CD4-positive, alpha-beta T cell (primary cell): ENCODE measurements at regions of chr1 and their contacts with region 1.

Region 1: GRCh38 chr1:1307908-1308755 is at the starts of genes ACAP3 and PUSL1:
- DNase-seq: peak; percentile 77 to 96 (median 86)
- ATAC-seq: peak; percentile 74
- H3K4me3 ChIP-seq: peak within 1 kb of the TSS; percentile 70
- H3K4me3 Mint-ChIP-seq: peak within 1 kb of the TSS; percentile 93
- H3K27ac ChIP-seq: peak within 1 kb of the TSS; percentile 76 to 88
- H3K27ac Mint-ChIP-seq: peak within 1 kb of the TSS; percentile 87
- H3K4me1 ChIP-seq: peaks cover 46% of the 10 kb centered on the region
- H3K4me1 Mint-ChIP-seq: peaks cover 25% of the 10 kb centered on the region
- H3K27me3 ChIP-seq: no peaks in the 10 kb centered on the region
- H3K27me3 Mint-ChIP-seq: no peaks in the 10 kb centered on the region
- CTCF ChIP-seq: no peak
- total RNA-seq, gene ACAP3: 45.3 to 46.4 TPM
- total RNA-seq, gene PUSL1: 18.1 to 19.2 TPM

Region 2: DNA sequence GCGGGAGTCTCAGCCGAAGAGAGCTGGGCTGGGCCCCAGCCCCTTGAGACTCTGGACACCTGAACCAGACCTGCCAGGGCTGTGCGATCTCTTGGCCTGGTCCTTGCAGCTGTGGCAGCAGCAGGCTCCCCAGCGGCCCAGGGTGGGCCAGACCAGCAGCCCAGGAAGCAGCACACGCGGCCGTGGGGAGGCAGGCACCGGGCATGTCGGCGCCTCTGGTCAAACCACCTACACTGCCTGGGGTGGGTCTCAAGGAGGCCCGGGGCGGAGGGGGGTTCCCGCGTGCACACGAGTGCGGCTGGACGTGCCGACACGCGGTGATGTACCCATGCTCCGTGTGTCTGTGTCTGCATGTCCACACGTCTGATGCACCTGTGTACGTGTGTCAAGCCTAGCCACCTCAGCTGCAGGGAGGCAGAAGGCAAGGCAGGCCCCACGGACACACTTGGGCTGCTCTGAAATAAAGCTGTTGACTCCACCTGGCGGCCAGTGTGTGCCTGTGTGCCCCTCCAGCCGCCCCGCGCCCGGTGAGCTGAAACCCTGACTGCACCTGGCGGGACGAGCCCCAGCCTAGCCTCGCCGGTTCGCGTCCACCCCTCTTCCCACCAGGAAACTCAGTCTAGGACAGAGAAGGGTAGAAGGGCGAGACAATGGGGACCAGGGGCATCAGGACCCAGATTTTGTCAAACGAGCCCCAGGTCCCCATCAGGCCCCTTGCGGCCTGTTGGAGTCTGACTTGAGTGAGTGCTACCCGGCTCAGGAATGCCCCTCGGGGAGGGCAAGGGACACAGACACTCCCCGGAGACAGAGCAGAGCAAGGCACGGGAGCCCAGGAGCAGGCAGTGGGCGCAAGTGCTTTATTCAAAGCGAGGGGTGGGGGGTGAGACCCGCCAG is 16.3 kb before region 1 on chr1:
- CTCF ChIA-PET with region 1: no interaction called
- POLR2A ChIA-PET with region 1: no interaction called
- intact Hi-C with region 1: no loop called
- DNase-seq: peak; percentile 43 to 84 (median 61)
- ATAC-seq: peak; percentile 81
- H3K4me3 ChIP-seq: no peak overlapping the region
- H3K4me3 Mint-ChIP-seq: no peak overlapping the region
- H3K27ac ChIP-seq: no peak overlapping the region
- H3K27ac Mint-ChIP-seq: no peak overlapping the region
- H3K4me1 ChIP-seq: peaks cover 14% of the 10 kb centered on the region
- H3K4me1 Mint-ChIP-seq: no peaks in the 10 kb centered on the region
- H3K27me3 ChIP-seq: no peaks in the 10 kb centered on the region
- H3K27me3 Mint-ChIP-seq: no peaks in the 10 kb centered on the region
- CTCF ChIP-seq: peak; percentile 42

Region 3: GRCh38 chr1:1324521-1325287 is 16.6 kb after region 1 on chr1 and contains the starts of genes CPTP and INTS11:
- CTCF ChIA-PET with region 1: no interaction called
- POLR2A ChIA-PET with region 1: interaction called, 4 read pairs
- intact Hi-C with region 1: loop called in 1 of 2 experiments (anchors 1 kb)
- DNase-seq: peak; percentile 93 to 98 (median 96)
- ATAC-seq: peak; percentile 84
- H3K4me3 ChIP-seq: peak within 1 kb of the TSS; percentile 69
- H3K4me3 Mint-ChIP-seq: peak within 1 kb of the TSS; percentile 93
- H3K27ac ChIP-seq: peak within 1 kb of the TSS; percentile 61 to 70
- H3K27ac Mint-ChIP-seq: peak within 1 kb of the TSS; percentile 81
- H3K4me1 ChIP-seq: peaks cover 56% of the 10 kb centered on the region
- H3K4me1 Mint-ChIP-seq: peaks cover 28% of the 10 kb centered on the region
- H3K27me3 ChIP-seq: no peaks in the 10 kb centered on the region
- H3K27me3 Mint-ChIP-seq: no peaks in the 10 kb centered on the region
- CTCF ChIP-seq: no peak
- total RNA-seq, gene CPTP: 11.6 to 12.9 TPM
- total RNA-seq, gene INTS11: 130 to 137 TPM

Region 4: GRCh38 chr1:1349256-1350012 is 41.3 kb after region 1 on chr1 and contains the start of gene DVL1:
- CTCF ChIA-PET with region 1: no interaction called
- POLR2A ChIA-PET with region 1: no interaction called
- intact Hi-C with region 1: loop called in 1 of 2 experiments (anchors 1 kb)
- DNase-seq: peak; percentile 58 to 90 (median 70)
- ATAC-seq: peak; percentile 75
- H3K4me3 ChIP-seq: peak within 1 kb of the TSS; percentile 58
- H3K4me3 Mint-ChIP-seq: peak within 1 kb of the TSS; percentile 86
- H3K27ac ChIP-seq: peak within 1 kb of the TSS in 1 of 2 donors; percentile 53
- H3K27ac Mint-ChIP-seq: no peak within 1 kb of the TSS
- H3K4me1 ChIP-seq: peaks cover 58% of the 10 kb centered on the region
- H3K4me1 Mint-ChIP-seq: peaks cover 36% of the 10 kb centered on the region
- H3K27me3 ChIP-seq: peaks cover 14 to 19% of the 10 kb centered on the region in 2 experiments
- H3K27me3 Mint-ChIP-seq: peaks cover 21% of the 10 kb centered on the region
- CTCF ChIP-seq: peak; percentile 27
- total RNA-seq, gene DVL1: 44.9 to 45.5 TPM

Region 5: GRCh38 chr1:1361982-1362423 is 53.9 kb after region 1 on chr1:
- CTCF ChIA-PET with region 1: no interaction called
- POLR2A ChIA-PET with region 1: no interaction called
- intact Hi-C with region 1: no loop called
- DNase-seq: no peak
- ATAC-seq: no peak
- H3K4me3 ChIP-seq: no peak overlapping the region
- H3K4me3 Mint-ChIP-seq: no peak overlapping the region
- H3K27ac ChIP-seq: no peak overlapping the region
- H3K27ac Mint-ChIP-seq: no peak overlapping the region
- H3K4me1 ChIP-seq: peaks cover 25% of the 10 kb centered on the region
- H3K4me1 Mint-ChIP-seq: peaks cover 12% of the 10 kb centered on the region
- H3K27me3 ChIP-seq: peaks cover 16 to 19% of the 10 kb centered on the region in 2 experiments
- H3K27me3 Mint-ChIP-seq: peaks cover 26% of the 10 kb centered on the region
- CTCF ChIP-seq: no peak